HAP-1 (cell line): ENCODE measurements at regions of chr17 and their contacts with region 1.

Region 1: DNA sequence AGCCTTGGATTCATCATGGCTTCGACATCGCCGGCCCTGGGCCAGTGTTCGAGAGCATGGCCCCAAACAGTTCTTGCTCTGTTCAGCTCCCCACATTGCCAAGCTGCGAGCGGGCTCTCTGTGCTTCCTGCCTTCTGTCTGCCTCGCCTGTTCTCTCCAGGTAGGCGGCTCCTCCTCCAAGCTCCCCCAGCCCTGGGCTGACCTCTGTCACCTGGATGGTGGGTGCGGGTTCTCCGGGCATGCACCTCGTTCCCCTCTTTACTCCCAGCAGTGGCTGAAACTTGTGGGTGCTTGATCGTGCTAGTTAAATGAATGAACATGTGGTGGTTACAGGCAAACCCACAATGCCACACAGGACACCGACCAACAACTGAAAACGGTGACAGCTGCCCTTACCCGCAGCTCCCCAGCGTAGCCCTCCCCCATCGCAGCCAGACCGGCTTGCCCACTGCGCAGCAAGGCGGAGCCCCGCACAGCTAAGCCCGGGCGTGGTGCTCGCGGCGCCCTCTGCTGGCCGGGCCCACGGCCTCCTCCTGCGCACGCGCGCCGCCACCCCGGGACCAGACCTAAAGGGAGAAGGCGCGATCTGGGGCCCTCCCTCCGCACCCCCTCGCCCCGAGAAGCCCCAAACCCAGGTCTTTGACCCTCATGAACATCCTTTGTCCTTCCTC is 23.0 kb upstream of the EIF1 start:
- DNase-seq: peak; percentile 77 to 93
- H3K4me3 ChIP-seq: peak overlapping the region; percentile 20
- H3K4me1 ChIP-seq: peaks cover 12% of the 10 kb centered on the region
- H3K27me3 ChIP-seq: no peaks in the 10 kb centered on the region

Region 2: GRCh38 chr17:40615295-40615988 is 1050.3 kb before region 1 on chr17:
- in situ Hi-C with region 1: loop called (anchors 25 kb)
- DNase-seq: peak; percentile 49 to 72
- H3K4me3 ChIP-seq: no peak overlapping the region
- H3K4me1 ChIP-seq: no peaks in the 10 kb centered on the region
- H3K27me3 ChIP-seq: peaks cover 10% of the 10 kb centered on the region; the same call in 1 of the 2 replicates

Region 3: GRCh38 chr17:40803617-40804082 is 862.1 kb before region 1 on chr17:
- in situ Hi-C with region 1: loop called (anchors 5 kb)
- DNase-seq: peak; percentile 59 to 88
- H3K4me3 ChIP-seq: no peak overlapping the region
- H3K4me1 ChIP-seq: no peaks in the 10 kb centered on the region
- H3K27me3 ChIP-seq: peaks cover 71% of the 10 kb centered on the region

Region 4: DNA sequence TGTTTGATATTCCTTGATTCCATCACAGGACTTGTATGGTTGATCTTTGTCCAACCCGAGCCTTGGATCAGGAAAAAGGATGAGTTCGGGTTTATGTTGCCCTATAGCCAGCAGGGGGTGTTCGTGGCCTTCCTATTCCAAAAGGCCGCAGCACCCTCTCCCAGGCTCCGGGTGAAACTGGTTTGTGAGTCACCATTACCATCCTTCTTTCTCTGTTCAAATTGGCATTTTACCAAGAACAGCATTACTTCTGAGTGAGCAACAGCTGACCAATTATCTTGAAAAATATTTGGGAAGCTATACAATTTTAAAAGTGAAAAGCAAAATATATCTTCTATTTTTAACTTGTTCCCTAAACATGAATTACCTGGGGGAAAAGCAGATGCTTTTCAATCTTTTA is 756.4 kb before region 1 on chr17:
- in situ Hi-C with region 1: loop called (anchors 25 kb)
- DNase-seq: peak; percentile 68 to 80
- H3K4me3 ChIP-seq: no peak overlapping the region
- H3K4me1 ChIP-seq: no peaks in the 10 kb centered on the region
- H3K27me3 ChIP-seq: peaks cover 12% of the 10 kb centered on the region

Region 5: GRCh38 chr17:41329281-41329948 is 336.3 kb before region 1 on chr17:
- in situ Hi-C with region 1: loop called (anchors 25 kb)
- DNase-seq: peak in 1 of 2 experiments; percentile 64
- H3K4me3 ChIP-seq: no peak overlapping the region
- H3K4me1 ChIP-seq: no peaks in the 10 kb centered on the region
- H3K27me3 ChIP-seq: no peaks in the 10 kb centered on the region

Region 6: DNA sequence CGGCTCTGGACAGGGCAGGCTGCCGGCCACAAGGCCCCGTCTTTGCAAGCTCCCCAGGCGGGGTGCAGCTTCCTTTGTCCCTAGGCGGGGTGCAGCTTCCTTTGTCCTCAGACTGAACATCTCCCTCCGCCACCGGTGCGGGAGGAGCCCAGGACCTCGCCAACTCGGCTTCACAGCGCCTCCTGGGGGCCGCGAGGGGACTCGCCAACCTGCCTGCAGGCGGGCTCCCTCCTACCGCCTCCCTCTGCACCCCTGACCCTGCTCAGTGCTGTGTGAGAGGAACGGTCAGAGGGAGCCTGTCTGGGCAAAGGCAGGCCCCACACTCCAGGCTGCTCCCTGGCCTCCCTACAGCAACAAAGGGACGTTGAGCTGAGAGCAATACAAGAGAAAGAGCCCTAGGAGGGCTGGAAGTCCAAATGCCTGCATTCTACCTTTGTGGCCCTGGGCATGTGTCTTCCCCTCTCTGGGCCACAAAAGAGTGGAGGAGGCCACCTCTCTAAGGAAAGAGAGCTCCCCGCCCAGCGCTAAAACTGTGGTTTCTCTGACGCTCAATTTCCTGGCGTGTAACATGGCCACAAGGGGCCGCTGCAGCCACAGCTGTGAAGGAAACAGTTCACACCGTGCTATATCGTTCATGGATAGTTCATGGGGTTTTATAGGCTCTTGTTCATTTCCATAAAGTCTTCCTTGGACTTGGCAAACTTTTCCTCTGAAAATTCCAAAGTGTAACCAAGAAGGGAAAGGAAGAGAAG is 116.7 kb before region 1 on chr17:
- in situ Hi-C with region 1: loop called (anchors 5 kb)
- DNase-seq: peak; percentile 65 to 88
- H3K4me3 ChIP-seq: no peak overlapping the region
- H3K4me1 ChIP-seq: 0 out of 2 replicates have a peak, but pooled peaks cover 2% of the 10 kb centered on the region
- H3K27me3 ChIP-seq: no peaks in the 10 kb centered on the region